Activated T-helper 1 cell treated with anti-CD3 and anti-CD28 coated beads, Interleukin-12 subunit alpha, Interleukin-12 subunit beta, Interleukin-2, Interleukin-4 antibody, amounts not matched to agents 30 ng/mL and 10 ng/mL and 1 ng/mL, durations not matched to agents 14 hours and 24 hours and 36 hours (primary cell): ENCODE measurements at regions of chr21 and their contacts with region 1.

Region 1: DNA sequence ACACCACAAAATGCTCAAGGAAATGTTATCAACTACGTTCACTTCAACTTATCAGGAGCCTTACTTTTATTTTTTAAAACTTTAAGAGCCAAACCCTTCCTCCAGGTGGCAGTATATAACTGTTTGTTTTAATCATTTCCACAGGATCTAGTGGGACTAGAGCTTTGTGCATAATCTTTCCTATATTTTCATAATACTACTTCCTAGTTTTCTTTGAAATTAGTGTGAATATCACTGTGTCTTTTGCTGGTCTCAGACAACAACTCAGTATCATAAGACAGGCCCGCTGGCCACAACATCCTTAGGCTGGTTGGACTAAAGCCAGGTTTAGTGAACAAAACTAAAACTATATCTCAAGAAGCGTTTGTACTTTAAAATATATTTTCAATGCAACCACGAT is 145.5 kb downstream of the TIAM1 start:
- DNase-seq: no peak
- H3K4me3 Mint-ChIP-seq: no peak overlapping the region
- H3K27ac Mint-ChIP-seq: no peak overlapping the region
- H3K4me1 Mint-ChIP-seq: peaks cover 46% of the 10 kb centered on the region
- H3K27me3 Mint-ChIP-seq: no peaks in the 10 kb centered on the region

Region 2: GRCh38 chr21:31180256-31181081 is 18.1 kb before region 1 on chr21:
- intact Hi-C with region 1: loop called (anchors 1 kb)
- DNase-seq: no peak
- H3K4me3 Mint-ChIP-seq: peak overlapping the region; percentile 92
- H3K27ac Mint-ChIP-seq: peak overlapping the region; percentile 98
- H3K4me1 Mint-ChIP-seq: peaks cover 70% of the 10 kb centered on the region
- H3K27me3 Mint-ChIP-seq: no peaks in the 10 kb centered on the region

Region 3: GRCh38 chr21:31326522-31327242 is 128.1 kb after region 1 on chr21:
- intact Hi-C with region 1: loop called (anchors 1 kb)
- DNase-seq: peak; percentile 37
- H3K4me3 Mint-ChIP-seq: peak overlapping the region; percentile 37
- H3K27ac Mint-ChIP-seq: peak overlapping the region; percentile 82
- H3K4me1 Mint-ChIP-seq: peaks cover 43% of the 10 kb centered on the region
- H3K27me3 Mint-ChIP-seq: no peaks in the 10 kb centered on the region

Region 4: GRCh38 chr21:31354604-31355443 is 156.2 kb after region 1 on chr21:
- intact Hi-C with region 1: loop called (anchors 1 kb)
- DNase-seq: peak; percentile 85
- H3K4me3 Mint-ChIP-seq: peak overlapping the region; percentile 38
- H3K27ac Mint-ChIP-seq: peak overlapping the region; percentile 77
- H3K4me1 Mint-ChIP-seq: peaks cover 14% of the 10 kb centered on the region
- H3K27me3 Mint-ChIP-seq: peaks cover 2% of the 10 kb centered on the region

Region 5: DNA sequence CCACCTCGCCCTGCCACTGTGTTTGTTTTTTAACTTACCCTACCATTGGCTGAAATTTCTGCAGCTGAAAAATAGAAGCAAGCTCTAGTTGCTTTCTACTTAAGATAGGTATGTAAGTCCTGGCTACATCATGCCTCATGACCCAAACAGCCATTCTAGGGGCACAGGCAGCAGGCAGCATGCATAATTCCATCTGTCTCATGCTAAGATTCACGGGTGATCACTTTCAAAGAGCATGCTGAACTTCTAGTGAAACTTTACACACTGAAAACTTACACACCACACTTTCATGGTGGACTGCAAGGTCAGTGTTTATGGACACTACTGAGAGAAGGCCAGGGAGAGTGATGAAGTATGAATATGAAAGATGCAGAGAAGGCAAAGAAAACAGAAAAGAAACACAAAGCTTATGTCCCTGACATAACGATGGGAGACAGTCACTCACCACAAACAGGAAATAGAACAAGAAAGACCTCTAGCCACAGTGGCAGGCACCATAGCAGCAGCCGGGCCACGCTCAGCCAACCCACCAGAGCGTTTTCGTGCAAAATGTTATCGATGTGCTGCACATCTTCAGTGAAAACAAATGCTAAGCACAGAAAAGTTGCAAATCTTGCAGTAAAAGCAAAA is 247.8 kb after region 1 on chr21:
- intact Hi-C with region 1: loop called (anchors 5 kb)
- DNase-seq: peak; percentile 49
- H3K4me3 Mint-ChIP-seq: peak overlapping the region; percentile 68
- H3K27ac Mint-ChIP-seq: peak overlapping the region; percentile 91
- H3K4me1 Mint-ChIP-seq: peaks cover 47% of the 10 kb centered on the region
- H3K27me3 Mint-ChIP-seq: peaks cover 6% of the 10 kb centered on the region

Region 6: GRCh38 chr21:31580866-31581276 is 382.3 kb after region 1 on chr21:
- intact Hi-C with region 1: loop called (anchors 1 kb)
- DNase-seq: peak; percentile 62
- H3K4me3 Mint-ChIP-seq: no peak overlapping the region
- H3K27ac Mint-ChIP-seq: no peak overlapping the region
- H3K4me1 Mint-ChIP-seq: no peaks in the 10 kb centered on the region
- H3K27me3 Mint-ChIP-seq: peaks cover 34% of the 10 kb centered on the region

Region 7: GRCh38 chr21:31659536-31660258 is 461.1 kb after region 1 on chr21 and contains the start of gene SOD1:
- intact Hi-C with region 1: loop called (anchors 5 kb)
- DNase-seq: peak; percentile 96
- H3K4me3 Mint-ChIP-seq: peak within 1 kb of the TSS; percentile 99
- H3K27ac Mint-ChIP-seq: peak within 1 kb of the TSS; percentile 100
- H3K4me1 Mint-ChIP-seq: peaks cover 76% of the 10 kb centered on the region
- H3K27me3 Mint-ChIP-seq: no peaks in the 10 kb centered on the region
- total RNA-seq, gene SOD1: 346 and 354 TPM in 2 replicates